Activated CD4-positive, alpha-beta memory T cell treated with anti-CD3 and anti-CD28 coated beads for 36 hours (primary cell): ENCODE measurements at regions of chr11 and their contacts with region 1.

Region 1: GRCh38 chr11:117946842-117947526 is 17.8 kb upstream of the TMPRSS13 start:
- DNase-seq: peak; percentile 91
- H3K4me3 Mint-ChIP-seq: no peak overlapping the region
- H3K27ac Mint-ChIP-seq: peak overlapping the region; percentile 65
- H3K4me1 Mint-ChIP-seq: peaks cover 77% of the 10 kb centered on the region
- H3K27me3 Mint-ChIP-seq: no peaks in the 10 kb centered on the region

Region 2: GRCh38 chr11:117807482-117808327 is 139.3 kb before region 1 on chr11:
- CTCF ChIA-PET with region 1: interaction called, 56 read pairs
- POLR2A ChIA-PET with region 1: no interaction called
- intact Hi-C with region 1: no loop called
- DNase-seq: peak; percentile 84
- H3K4me3 Mint-ChIP-seq: no peak overlapping the region
- H3K27ac Mint-ChIP-seq: no peak overlapping the region
- H3K4me1 Mint-ChIP-seq: peaks cover 17% of the 10 kb centered on the region
- H3K27me3 Mint-ChIP-seq: peaks cover 2% of the 10 kb centered on the region

Region 3: GRCh38 chr11:117843666-117844484 is 103.1 kb before region 1 on chr11:
- CTCF ChIA-PET with region 1: interaction called, 219 read pairs
- POLR2A ChIA-PET with region 1: interaction called, 3 read pairs
- intact Hi-C with region 1: loop called (anchors 1 kb)
- DNase-seq: peak; percentile 90
- H3K4me3 Mint-ChIP-seq: no peak overlapping the region
- H3K27ac Mint-ChIP-seq: no peak overlapping the region
- H3K4me1 Mint-ChIP-seq: no peaks in the 10 kb centered on the region
- H3K27me3 Mint-ChIP-seq: no peaks in the 10 kb centered on the region

Region 4: GRCh38 chr11:117919781-117920221 is 27.2 kb before region 1 on chr11:
- CTCF ChIA-PET with region 1: interaction called, 16 read pairs
- POLR2A ChIA-PET with region 1: interaction called, 3 read pairs
- intact Hi-C with region 1: no loop called
- DNase-seq: peak; percentile 45
- H3K4me3 Mint-ChIP-seq: no peak overlapping the region
- H3K27ac Mint-ChIP-seq: no peak overlapping the region
- H3K4me1 Mint-ChIP-seq: peaks cover 9% of the 10 kb centered on the region
- H3K27me3 Mint-ChIP-seq: no peaks in the 10 kb centered on the region

Region 5: DNA sequence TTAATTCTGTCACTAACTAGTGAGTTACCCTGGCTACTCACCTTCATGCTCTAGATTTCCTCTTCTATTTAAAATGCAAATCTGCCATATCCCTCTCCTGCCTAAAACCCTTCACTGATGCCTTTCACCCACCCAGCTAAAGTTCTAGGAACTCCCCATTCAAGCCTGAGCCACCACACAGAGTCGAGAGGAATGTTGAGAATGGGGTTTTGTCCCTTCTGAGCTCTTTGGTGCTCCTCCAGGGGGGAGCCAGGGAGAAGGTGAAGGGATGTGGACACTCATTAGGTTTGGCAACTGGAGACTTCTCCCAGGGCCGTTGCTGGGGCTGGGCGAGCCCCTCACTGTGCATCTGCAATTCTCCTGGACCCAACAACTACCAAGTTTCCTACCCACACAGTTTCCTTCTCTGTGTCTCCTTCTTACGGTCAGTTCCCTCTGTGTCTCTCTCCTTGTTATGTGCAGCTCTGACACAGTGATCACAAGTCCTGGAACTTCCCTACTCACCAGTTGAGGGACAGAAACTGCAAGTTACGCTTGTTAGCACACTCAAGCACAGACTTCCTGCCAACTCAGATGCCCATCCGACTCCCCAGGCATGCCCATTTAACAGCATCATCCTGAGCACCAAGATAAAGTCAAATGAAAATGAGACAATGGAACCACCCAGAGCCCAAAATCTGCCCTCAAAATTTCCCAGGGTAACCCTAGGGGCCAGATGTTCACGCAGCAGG is 32.7 kb after region 1 on chr11:
- CTCF ChIA-PET with region 1: interaction called, 92 read pairs
- POLR2A ChIA-PET with region 1: interaction called, 11 read pairs
- intact Hi-C with region 1: no loop called
- DNase-seq: peak; percentile 63
- H3K4me3 Mint-ChIP-seq: peak overlapping the region; percentile 2
- H3K27ac Mint-ChIP-seq: peak overlapping the region; percentile 85
- H3K4me1 Mint-ChIP-seq: peaks cover 80% of the 10 kb centered on the region
- H3K27me3 Mint-ChIP-seq: no peaks in the 10 kb centered on the region

Region 6: DNA sequence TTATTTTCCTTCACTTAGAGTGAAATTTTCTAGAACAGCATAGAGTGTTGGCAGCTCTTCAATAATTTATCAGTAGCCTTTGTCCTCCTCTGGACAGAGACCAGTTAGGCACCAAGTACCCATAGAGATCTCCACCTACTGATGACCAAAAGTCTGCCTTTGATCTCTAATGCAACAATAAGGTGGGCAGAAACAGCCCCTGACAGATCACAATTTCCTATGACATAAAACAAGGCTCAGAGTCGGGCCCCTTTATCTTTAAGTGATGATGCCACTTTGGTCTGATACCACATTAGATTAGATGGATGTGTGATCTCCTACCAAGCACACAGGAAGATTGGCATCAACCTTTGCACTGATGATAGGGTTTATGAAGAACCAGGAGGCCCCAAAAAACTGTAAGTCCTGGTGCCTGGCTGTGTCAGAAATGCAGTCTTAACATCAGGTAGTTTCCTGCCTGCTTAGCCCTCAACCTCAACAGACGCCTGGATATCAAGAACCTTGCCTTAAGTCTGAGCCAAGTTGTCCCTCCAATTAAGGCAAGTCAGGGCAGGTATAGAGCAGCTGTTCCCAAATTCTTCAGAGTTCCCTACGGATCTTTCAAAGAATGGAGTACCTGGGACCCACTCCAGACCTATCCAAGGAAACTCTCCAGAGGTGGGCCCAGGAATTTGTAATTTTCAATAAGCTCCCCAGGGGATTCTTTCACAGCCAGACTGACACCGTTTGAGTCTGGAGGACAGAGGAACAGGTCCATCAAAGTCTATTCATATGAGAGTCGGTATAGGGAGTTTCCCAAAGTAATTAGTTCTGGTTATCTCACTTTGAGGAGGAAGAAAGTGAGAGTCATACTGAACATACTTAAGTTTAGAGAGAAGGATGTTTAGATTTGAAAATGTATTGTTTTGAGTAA is 99.3 kb after region 1 on chr11:
- CTCF ChIA-PET with region 1: interaction called, 248 read pairs
- POLR2A ChIA-PET with region 1: interaction called, 4 read pairs
- intact Hi-C with region 1: no loop called
- DNase-seq: peak; percentile 58
- H3K4me3 Mint-ChIP-seq: peak overlapping the region; percentile 28
- H3K27ac Mint-ChIP-seq: peak overlapping the region; percentile 91
- H3K4me1 Mint-ChIP-seq: peaks cover 91% of the 10 kb centered on the region
- H3K27me3 Mint-ChIP-seq: no peaks in the 10 kb centered on the region